ENCODE measurements at regions of chr7 and their contacts with region 1.

Region 1: DNA sequence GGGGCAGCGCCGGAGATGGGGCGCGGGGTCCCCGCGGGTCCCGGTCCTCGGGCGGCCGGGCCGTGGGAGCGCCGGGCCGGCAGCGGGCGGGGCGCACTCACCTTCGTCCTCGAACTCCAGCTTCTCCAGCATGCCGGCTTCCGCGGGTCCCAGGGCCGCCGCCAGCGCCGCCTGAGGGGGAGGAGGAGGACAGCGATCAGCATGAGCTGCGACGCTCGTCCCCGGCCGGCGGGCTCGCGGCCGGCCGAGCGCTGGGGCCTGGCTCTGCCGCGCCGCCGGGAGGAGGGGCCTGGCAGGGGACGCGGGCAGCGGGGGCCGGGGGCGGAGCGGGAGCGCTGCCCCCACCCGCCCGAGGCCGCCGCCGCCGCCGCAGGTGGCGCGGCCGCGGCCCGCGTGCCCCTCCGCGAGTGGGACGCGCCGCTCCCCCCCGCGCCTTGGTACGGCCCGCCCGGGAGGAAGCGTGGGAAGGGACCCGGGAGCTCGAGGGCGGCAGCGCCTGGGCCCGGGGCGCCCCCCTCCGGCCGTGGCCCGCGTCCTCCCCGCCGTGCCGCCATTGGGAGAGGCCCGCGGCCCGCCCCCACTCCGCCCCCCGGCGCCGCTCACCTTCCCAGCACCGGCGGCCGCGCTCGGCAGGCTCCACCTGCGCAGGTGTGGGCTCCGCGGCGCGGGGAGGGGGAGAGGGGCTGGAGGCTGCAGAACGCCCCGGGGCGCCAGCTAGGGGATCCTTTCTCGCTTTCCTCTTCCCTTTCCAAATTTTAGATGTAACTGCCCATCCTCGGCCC is 112.5 kb upstream of the RHEB start:
- DNase-seq: peak; percentile 86
- H3K4me3 ChIP-seq: peak overlapping the region; percentile 68
- H3K27ac ChIP-seq: no peak overlapping the region
- H3K4me1 ChIP-seq: peaks cover 16% of the 10 kb centered on the region
- CTCF ChIP-seq: peak; percentile 52; the same call in 1 of the 2 replicates

Region 2: DNA sequence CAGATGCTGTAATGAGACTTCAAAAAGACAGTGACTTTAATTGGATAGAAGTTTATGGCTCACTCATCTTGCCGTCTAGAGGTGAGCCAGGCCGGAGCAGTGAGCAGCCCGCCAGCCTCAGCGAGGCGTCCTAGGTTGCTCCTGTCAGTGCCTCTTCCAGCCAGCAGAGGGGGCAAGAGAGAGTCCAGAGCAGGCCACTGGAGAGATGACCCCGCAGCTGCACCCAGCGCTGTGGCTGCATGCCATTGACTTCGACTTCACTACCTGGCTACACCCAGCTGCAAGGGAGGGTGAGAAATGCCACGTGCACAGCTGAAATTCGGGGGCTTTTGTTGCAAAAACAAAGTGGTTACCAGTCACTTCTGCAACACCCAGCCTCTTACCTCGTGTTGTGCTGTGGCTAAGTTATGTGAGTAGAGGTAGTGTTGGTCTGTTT is 264.0 kb before region 1 on chr7:
- CTCF ChIA-PET with region 1: no interaction called
- POLR2A ChIA-PET with region 1: no interaction called
- intact Hi-C with region 1: loop called (anchors 5 kb)
- DNase-seq: peak; percentile 78
- H3K4me3 ChIP-seq: no peak overlapping the region
- H3K27ac ChIP-seq: no peak overlapping the region
- H3K4me1 ChIP-seq: peaks cover 3% of the 10 kb centered on the region
- CTCF ChIP-seq: peak; percentile 92

Region 3: DNA sequence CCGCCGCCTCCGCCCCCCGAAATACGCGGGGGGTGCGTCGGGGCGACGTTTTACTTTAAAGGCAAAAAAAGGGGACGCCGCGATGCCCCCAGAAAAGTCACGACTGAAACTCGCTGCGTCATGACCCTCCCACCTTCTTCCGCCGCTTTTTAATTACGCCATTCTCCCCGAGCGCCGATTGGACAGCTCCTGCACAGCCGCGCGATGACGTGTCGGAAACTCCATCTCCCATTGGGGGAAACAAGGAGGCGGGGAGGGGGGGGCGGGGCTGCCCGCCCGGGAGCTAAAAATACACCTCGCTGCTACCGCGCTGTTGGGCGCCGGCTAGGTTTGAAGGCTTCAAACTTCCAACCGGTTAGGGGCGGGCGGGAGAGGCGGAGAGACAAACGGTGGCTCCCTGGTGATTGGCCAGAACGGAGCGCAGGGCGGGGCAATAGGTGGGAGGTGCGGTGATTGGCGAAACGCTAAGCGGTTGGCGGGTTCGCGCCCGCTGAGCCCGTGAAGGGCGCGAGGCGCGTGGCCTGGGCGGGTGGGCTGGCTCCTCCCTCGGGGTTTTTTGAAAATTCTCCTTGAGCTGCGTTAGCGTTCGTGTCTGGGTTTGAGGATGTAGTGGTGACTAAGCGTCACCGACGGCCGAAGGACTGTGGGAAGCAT is 112.3 kb before region 1 on chr7 and contains the start of gene RHEB:
- CTCF ChIA-PET with region 1: no interaction called
- POLR2A ChIA-PET with region 1: interaction called, 4 read pairs
- intact Hi-C with region 1: loop called (anchors 5 kb)
- DNase-seq: peak; percentile 98
- H3K4me3 ChIP-seq: peak within 1 kb of the TSS; percentile 90
- H3K27ac ChIP-seq: peak within 1 kb of the TSS; percentile 85
- H3K4me1 ChIP-seq: peaks cover 19% of the 10 kb centered on the region
- CTCF ChIP-seq: no peak
- total RNA-seq, gene RHEB: 57.6 and 88.0 TPM in 2 replicates

Region 4: GRCh38 chr7:151599401-151600227 is 32.5 kb before region 1 on chr7:
- CTCF ChIA-PET with region 1: no interaction called
- POLR2A ChIA-PET with region 1: no interaction called
- intact Hi-C with region 1: no loop called
- DNase-seq: no peak
- H3K4me3 ChIP-seq: no peak overlapping the region
- H3K27ac ChIP-seq: no peak overlapping the region
- H3K4me1 ChIP-seq: no peaks in the 10 kb centered on the region
- CTCF ChIP-seq: no peak

Region 5: DNA sequence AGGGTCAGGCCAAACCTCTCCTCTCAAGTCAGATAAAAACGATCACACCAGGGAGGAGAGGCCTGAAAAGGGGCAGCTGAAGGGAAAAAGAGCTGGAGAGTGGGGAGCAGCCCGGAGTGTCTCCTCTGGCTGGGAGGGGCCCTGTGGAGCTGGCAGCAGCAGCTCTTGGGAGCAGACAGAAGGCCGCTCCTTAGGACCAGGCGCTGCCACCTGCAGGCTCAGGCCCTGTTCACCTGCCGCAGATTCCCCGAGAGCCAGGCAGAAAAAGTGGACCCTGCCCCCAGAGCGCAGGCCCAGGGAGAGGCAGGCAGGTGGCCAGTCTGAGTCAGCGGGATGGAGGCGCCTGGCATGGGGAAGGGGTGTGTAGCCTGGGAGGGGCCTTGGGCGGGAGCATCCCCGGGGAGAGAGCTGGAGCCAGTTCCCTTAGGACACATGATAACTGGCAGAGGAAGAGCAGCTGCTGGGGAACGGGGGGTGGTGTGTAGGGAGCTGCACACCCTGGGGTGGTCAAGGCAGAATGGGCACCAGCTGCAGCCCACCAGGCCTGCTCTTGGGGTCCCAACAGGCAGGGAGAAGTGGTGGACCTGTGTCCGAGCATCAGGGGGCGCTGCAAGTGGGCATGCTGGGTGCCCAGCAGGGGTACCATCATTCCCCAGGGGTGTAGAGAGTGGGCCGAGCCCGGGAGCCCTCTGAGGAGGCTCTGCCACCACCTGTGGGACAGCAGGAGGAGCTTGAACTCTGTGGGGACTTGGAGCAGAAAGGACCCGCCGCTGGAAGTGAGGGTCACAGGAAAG is 64.8 kb after region 1 on chr7:
- CTCF ChIA-PET with region 1: no interaction called
- POLR2A ChIA-PET with region 1: no interaction called
- intact Hi-C with region 1: no loop called
- DNase-seq: no peak
- H3K4me3 ChIP-seq: no peak overlapping the region
- H3K27ac ChIP-seq: no peak overlapping the region
- H3K4me1 ChIP-seq: no peaks in the 10 kb centered on the region
- CTCF ChIP-seq: no peak

Measured in OCI-LY7 (cell line).